Caco-2 (cell line): ENCODE measurements at regions of chr10 and their contacts with region 1.

Region 1: DNA sequence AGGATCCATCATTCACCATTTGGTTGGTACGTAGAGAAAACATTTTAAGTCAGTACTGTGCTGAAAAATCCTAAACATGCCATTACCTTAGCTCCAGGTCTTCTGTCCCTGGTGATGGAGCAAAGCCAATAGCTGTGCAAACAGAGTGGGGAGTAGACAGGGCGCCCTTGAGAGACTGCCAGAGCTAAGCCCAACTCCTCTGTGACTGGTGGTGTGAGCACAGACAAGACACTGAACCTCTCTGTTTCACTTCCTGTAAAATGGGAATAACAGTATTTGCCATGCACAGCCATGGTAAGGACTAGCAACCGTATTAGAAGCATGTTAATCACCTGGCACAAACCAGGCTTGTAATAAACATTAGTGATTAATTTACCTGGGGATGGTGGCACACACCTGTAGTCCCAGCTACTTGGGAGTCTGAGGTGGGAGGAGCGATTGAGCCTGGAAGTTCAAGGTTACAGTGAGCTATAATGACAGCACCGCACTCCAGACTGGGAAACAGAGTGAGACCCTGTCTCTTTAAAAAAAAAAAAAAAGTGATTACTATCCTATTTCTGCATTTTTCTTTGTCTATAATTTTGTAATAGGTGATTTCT is 28.7 kb downstream of the LYZL1 start:
- DNase-seq: no peak
- H3K4me3 ChIP-seq: no peak overlapping the region
- H3K4me3 Mint-ChIP-seq: no peak overlapping the region
- H3K27ac Mint-ChIP-seq: no peak overlapping the region
- H3K4me1 ChIP-seq: peaks cover 20% of the 10 kb centered on the region
- H3K4me1 Mint-ChIP-seq: peaks cover 38% of the 10 kb centered on the region
- H3K27me3 ChIP-seq: no peaks in the 10 kb centered on the region
- H3K27me3 Mint-ChIP-seq: no peaks in the 10 kb centered on the region
- CTCF ChIP-seq: no peak

Region 2: GRCh38 chr10:29328983-29329382 is 11.5 kb after region 1 on chr10:
- CTCF ChIA-PET with region 1: no interaction called
- POLR2A ChIA-PET with region 1: no interaction called
- intact Hi-C with region 1: loop called (anchors 1 kb)
- DNase-seq: no peak
- H3K4me3 ChIP-seq: no peak overlapping the region
- H3K4me3 Mint-ChIP-seq: no peak overlapping the region
- H3K27ac Mint-ChIP-seq: peak overlapping the region; percentile 4
- H3K4me1 ChIP-seq: peaks cover 50% of the 10 kb centered on the region
- H3K4me1 Mint-ChIP-seq: peaks cover 35% of the 10 kb centered on the region
- H3K27me3 ChIP-seq: no peaks in the 10 kb centered on the region
- H3K27me3 Mint-ChIP-seq: no peaks in the 10 kb centered on the region
- CTCF ChIP-seq: no peak

Region 3: GRCh38 chr10:29370097-29371092 is 52.9 kb after region 1 on chr10:
- CTCF ChIA-PET with region 1: no interaction called
- POLR2A ChIA-PET with region 1: no interaction called
- intact Hi-C with region 1: no loop called
- DNase-seq: no peak
- H3K4me3 ChIP-seq: no peak overlapping the region
- H3K4me3 Mint-ChIP-seq: no peak overlapping the region
- H3K27ac Mint-ChIP-seq: no peak overlapping the region
- H3K4me1 ChIP-seq: no peaks in the 10 kb centered on the region
- H3K4me1 Mint-ChIP-seq: no peaks in the 10 kb centered on the region
- H3K27me3 ChIP-seq: no peaks in the 10 kb centered on the region
- H3K27me3 Mint-ChIP-seq: no peaks in the 10 kb centered on the region
- CTCF ChIP-seq: no peak